Mammary epithelial cell (primary cell): ENCODE measurements at regions of chr7 and their contacts with region 1.

Region 1: DNA sequence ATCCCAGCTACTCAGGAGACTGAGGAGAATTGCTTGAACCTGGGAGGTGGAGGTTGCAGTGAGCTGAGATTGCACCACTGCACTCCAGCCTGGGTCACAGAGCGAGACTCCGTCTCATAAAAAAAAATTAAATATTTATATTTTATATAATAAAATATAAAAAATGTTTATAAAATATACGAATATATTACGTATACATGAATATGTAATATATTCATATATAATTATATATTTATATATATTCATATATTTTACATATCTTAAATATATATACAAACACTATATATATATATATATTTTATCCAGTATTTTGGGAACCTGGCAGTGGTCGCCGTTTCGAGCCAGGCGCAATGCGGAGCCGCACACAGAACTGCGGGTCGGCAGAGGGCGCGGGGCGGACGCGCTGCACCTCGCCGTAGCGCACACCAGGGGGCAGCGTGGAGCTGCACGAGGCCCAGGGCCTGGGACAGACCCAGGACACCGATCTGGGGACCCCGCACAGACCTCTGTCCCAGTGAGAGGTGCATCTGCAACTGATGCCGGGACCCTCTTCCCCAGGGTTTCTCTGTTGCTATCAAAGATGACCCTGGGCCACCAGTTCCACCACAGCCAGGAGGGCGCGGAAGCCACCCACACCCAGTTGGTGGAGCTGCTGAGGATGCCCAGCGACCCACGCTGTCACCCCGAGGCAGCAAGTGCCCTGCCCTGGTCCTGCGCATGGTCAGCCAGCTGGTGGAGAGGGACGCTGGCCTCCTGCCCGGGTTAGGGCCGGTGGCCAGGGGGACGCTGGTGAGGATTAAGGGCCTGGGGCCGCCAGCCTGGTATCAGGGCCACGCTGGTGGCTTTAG is 22.7 kb downstream of the AP5Z1 start:
- DNase-seq: no peak
- H3K4me3 ChIP-seq: no peak overlapping the region
- H3K27ac ChIP-seq: no peak overlapping the region
- H3K4me1 ChIP-seq: peaks cover 8% of the 10 kb centered on the region
- H3K27me3 ChIP-seq: no peaks in the 10 kb centered on the region
- CTCF ChIP-seq: peak; percentile 46 to 85

Region 2: GRCh38 chr7:2844165-2844898 is 1953.8 kb before region 1 on chr7 and contains the start of gene GNA12:
- CTCF ChIA-PET with region 1: interaction called, 52 read pairs
- dilution Hi-C with region 1: no loop called
- in situ Hi-C with region 1: no loop called
- intact Hi-C with region 1: no loop called
- DNase-seq: peak; percentile 98
- H3K4me3 ChIP-seq: peak within 1 kb of the TSS; percentile 60 to 80 (median 65)
- H3K27ac ChIP-seq: peak within 1 kb of the TSS; percentile 30
- H3K4me1 ChIP-seq: peaks cover 13% of the 10 kb centered on the region
- H3K27me3 ChIP-seq: no peaks in the 10 kb centered on the region
- CTCF ChIP-seq: no peak
- total RNA-seq, gene GNA12: 26.2 to 46.0 TPM

Region 3: DNA sequence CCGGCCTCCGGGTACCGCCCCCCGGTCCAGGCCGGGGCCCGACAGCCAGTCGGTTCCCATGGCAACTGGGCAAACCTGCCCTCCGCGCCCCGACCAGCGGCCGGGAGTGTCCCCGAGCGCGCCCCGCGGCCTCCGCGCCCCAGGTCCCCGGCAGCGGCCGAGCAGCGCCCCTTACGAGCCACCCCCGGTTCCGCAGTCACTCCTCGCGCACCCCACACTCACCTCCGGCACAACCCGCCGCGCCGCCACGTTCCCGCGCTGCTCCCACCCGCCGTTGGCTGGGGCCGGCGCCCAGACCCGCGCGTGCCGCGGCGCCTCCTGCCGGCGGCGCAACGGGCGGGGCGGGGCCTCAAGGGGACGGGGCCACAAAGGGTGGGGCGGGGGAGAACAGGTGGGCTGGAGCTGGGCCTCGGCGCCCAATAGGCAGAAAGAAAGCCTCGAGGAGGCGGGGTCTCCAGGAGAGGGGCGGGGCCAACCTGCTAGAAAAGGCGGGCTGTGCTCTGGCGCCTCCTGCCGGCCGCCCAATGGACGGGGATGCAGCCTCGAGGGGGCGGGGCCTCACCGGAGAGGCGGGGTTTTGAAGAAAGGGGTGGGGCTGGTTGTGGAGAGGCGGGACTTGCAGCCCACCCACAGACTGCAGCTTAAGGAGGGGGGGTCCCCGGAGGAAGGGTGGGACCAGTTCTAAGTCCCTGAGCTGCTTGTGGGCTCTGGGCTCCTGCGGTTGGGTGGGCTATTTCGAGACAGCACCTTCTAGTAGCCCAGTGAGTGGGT is 85.5 kb after region 1 on chr7 and contains the start of gene RADIL:
- CTCF ChIA-PET with region 1: no interaction called
- dilution Hi-C with region 1: no loop called
- in situ Hi-C with region 1: no loop called
- intact Hi-C with region 1: loop called (anchors 10 kb)
- DNase-seq: peak; percentile 70
- H3K4me3 ChIP-seq: peak within 1 kb of the TSS in 1 of 3 experiments; percentile 28
- H3K27ac ChIP-seq: no peak within 1 kb of the TSS
- H3K4me1 ChIP-seq: peaks cover 10% of the 10 kb centered on the region
- H3K27me3 ChIP-seq: peaks cover 9% of the 10 kb centered on the region
- CTCF ChIP-seq: peak in 1 of 2 donors; percentile 31
- total RNA-seq, gene RADIL: 0.17 to 0.28 TPM

Region 4: DNA sequence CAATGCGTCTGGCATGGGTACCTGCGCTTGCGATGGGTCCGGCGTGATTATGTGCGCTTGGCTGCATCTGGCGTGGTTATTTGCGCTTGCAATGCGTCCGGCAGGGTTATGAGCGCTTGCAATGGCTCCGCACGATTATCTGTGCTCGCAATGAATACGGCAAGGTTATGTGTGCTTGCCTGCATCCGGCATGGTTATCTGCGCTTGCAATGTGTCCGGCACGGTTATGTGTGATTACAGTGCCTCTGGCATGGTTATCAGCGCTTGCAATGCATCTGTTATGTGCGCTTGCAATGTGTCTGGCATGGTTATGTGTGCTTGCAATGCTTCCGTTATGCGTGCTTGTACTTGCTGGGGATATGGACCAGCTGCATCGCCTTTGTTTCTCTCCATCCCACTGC is 285.2 kb after region 1 on chr7:
- CTCF ChIA-PET with region 1: no interaction called
- dilution Hi-C with region 1: no loop called
- in situ Hi-C with region 1: loop called in 1 of 2 experiments (anchors 5 kb)
- intact Hi-C with region 1: loop called (anchors 1 kb)
- DNase-seq: no peak
- H3K4me3 ChIP-seq: no peak overlapping the region
- H3K27ac ChIP-seq: no peak overlapping the region
- H3K4me1 ChIP-seq: no peaks in the 10 kb centered on the region
- H3K27me3 ChIP-seq: no peaks in the 10 kb centered on the region
- CTCF ChIP-seq: no peak

Region 5: GRCh38 chr7:5088906-5089305 is 290.8 kb after region 1 on chr7:
- CTCF ChIA-PET with region 1: no interaction called
- dilution Hi-C with region 1: no loop called
- in situ Hi-C with region 1: loop called in 1 of 2 experiments (anchors 5 kb)
- intact Hi-C with region 1: loop called (anchors 1 kb)
- DNase-seq: no peak
- H3K4me3 ChIP-seq: no peak overlapping the region
- H3K27ac ChIP-seq: no peak overlapping the region
- H3K4me1 ChIP-seq: no peaks in the 10 kb centered on the region
- H3K27me3 ChIP-seq: no peaks in the 10 kb centered on the region
- CTCF ChIP-seq: no peak

Region 6: GRCh38 chr7:5177060-5177459 is 379.0 kb after region 1 on chr7:
- CTCF ChIA-PET with region 1: no interaction called
- dilution Hi-C with region 1: no loop called
- in situ Hi-C with region 1: no loop called
- intact Hi-C with region 1: loop called (anchors 2 kb)
- DNase-seq: peak; percentile 49
- H3K4me3 ChIP-seq: no peak overlapping the region
- H3K27ac ChIP-seq: no peak overlapping the region
- H3K4me1 ChIP-seq: no peaks in the 10 kb centered on the region
- H3K27me3 ChIP-seq: no peaks in the 10 kb centered on the region
- CTCF ChIP-seq: no peak